ENCODE measurements at regions of chr1 and their contacts with region 1.

Region 1: DNA sequence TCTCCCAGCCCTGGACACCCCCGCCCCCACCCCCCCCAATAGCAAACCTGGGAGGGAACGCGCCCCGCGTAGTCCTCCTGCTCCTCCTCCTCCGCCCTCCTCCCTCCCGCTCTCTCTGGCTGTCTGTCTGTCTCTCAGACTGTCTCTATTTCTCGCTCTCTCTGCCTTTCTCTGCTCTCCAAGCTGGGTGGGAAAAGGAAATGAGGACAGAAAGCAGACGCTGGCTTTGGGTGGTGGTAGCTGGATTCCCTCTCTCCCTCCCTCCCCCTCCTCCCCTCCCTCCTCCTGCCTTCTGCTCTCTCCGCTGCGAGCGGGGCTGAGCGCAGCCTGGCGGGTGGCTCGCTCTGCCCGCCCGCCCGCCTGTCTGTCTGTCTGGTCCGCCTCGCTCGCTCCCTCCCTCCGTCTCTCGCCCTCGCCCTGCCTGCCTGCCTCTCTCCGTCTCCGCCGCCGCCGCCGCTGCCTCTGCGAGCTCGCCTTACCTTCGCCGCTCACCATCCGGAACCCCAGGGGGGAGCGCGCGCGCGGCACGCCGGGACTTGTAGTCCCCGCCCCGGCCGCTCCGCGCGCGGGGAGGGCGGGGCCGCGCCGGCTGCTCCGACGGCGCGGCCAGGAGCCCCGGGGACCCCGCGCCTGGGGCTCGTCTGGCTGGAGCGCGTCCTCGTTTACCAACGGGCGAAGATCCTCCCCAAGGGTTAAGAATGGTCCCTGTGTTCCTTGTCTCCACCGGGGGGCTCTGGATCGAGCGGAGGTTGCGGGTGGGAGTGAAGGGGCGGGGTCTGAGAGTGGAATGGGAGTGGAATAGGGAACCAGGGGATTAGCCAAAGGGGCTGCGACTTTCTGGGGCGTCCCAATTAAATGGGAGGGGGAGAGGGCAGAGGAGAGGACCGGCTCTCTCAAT is at the start of gene AHDC1:
- DNase-seq: peak; percentile 94
- ATAC-seq: peak; percentile 88
- H3K4me3 Mint-ChIP-seq: peak within 1 kb of the TSS; percentile 88
- H3K27ac Mint-ChIP-seq: peak within 1 kb of the TSS; percentile 82
- H3K4me1 Mint-ChIP-seq: peaks cover 45% of the 10 kb centered on the region
- H3K27me3 Mint-ChIP-seq: no peaks in the 10 kb centered on the region
- total RNA-seq, gene AHDC1: 20.9 to 22.7 TPM

Region 2: DNA sequence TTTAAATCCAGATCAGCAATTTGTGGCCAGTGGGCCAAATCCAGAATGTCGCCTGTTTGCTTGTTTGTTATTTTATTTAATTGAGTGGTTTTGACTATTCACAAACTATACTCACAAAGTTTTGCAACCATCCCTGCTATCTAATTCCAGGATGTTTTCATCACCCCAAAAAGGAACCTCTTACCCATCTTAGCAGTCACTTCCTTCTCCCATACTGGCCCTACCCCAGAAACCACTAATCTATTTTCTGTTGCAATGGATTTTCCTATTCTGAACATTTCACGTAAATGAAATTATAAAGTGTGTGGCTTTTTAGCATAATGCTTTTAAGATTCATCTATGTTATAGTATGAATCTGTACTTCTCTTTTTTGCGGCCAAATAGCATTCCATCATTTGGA is 328.2 kb before region 1 on chr1:
- CTCF ChIA-PET with region 1: no interaction called
- POLR2A ChIA-PET with region 1: no interaction called
- DNase-seq: no peak
- ATAC-seq: no peak
- H3K4me3 Mint-ChIP-seq: no peak overlapping the region
- H3K27ac Mint-ChIP-seq: no peak overlapping the region
- H3K4me1 Mint-ChIP-seq: no peaks in the 10 kb centered on the region
- H3K27me3 Mint-ChIP-seq: no peaks in the 10 kb centered on the region

Region 3: GRCh38 chr1:27392096-27392777 is 211.7 kb before region 1 on chr1 and contains the start of gene GPR3:
- CTCF ChIA-PET with region 1: interaction called, 34 read pairs
- POLR2A ChIA-PET with region 1: no interaction called
- DNase-seq: peak; percentile 95
- ATAC-seq: peak; percentile 94
- H3K4me3 Mint-ChIP-seq: peak within 1 kb of the TSS; percentile 74
- H3K27ac Mint-ChIP-seq: peak within 1 kb of the TSS; percentile 82
- H3K4me1 Mint-ChIP-seq: peaks cover 25% of the 10 kb centered on the region
- H3K27me3 Mint-ChIP-seq: peaks cover 12% of the 10 kb centered on the region
- total RNA-seq, gene GPR3: 0.47 to 0.66 TPM

Region 4: GRCh38 chr1:27525296-27526272 is 78.3 kb before region 1 on chr1:
- CTCF ChIA-PET with region 1: interaction called, 97 read pairs
- POLR2A ChIA-PET with region 1: interaction called, 3 read pairs
- DNase-seq: peak; percentile 85
- ATAC-seq: peak; percentile 56
- H3K4me3 Mint-ChIP-seq: peak overlapping the region; percentile 66
- H3K27ac Mint-ChIP-seq: peak overlapping the region; percentile 65
- H3K4me1 Mint-ChIP-seq: peaks cover 67% of the 10 kb centered on the region
- H3K27me3 Mint-ChIP-seq: no peaks in the 10 kb centered on the region

Region 5: DNA sequence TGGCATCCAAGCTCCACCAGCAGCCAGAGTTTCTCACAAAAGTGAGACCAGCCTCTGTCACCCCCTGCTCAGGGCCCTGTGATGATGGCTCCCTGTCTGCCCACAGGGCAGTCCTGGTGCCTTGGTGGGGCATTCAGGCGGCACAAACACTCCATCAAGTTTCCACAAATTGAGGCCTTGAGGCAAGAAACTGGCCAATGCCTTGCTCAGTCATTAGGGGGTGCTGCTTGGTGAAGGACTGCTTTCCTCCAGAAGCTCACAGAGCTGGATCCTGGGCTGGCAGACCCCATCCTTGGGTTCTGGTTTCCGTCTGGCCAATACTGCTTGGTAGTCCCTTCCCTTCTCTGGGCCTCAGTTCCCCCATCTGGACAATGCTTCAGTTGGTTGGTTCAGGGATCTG is 12.5 kb after region 1 on chr1:
- CTCF ChIA-PET with region 1: interaction called, 61 read pairs
- POLR2A ChIA-PET with region 1: no interaction called
- DNase-seq: no peak
- ATAC-seq: no peak
- H3K4me3 Mint-ChIP-seq: no peak overlapping the region
- H3K27ac Mint-ChIP-seq: no peak overlapping the region
- H3K4me1 Mint-ChIP-seq: peaks cover 49% of the 10 kb centered on the region
- H3K27me3 Mint-ChIP-seq: peaks cover 5% of the 10 kb centered on the region

Region 6: DNA sequence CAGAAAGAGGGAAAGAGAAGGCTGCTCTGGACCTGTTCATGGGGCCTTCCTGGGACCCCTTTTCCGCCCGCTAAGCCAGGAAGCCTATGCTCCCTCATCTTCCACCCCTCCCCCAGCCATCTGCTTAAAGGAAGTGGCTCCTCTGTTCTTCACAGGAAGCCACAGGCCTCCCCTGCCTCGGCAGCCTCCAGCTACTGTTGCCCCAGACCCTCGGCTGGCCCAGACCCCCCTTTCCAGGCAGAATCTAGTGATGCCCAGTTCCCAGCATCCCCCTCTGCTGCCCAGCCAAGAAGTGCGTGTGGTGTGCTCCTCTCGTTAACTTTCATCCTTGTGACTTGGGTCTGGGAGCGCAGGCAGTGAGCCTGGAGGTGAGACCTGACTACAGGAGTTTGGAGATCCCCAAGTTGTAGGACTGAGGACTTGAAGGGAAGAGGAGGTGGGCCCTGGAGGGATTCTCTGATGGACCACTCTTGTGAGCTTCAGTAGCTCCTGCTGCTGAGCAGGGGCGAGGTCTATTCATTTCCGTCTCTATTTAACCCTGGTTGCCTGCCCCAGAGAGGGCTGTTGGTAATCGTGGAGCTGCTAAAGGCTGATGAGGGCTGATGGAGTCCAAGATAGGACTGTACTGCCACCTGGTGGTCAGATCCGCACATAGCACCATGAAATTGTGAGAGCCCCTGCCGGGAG is 58.9 kb after region 1 on chr1:
- CTCF ChIA-PET with region 1: interaction called, 320 read pairs
- POLR2A ChIA-PET with region 1: interaction called, 81 read pairs
- DNase-seq: peak; percentile 94
- ATAC-seq: peak; percentile 83
- H3K4me3 Mint-ChIP-seq: peak overlapping the region; percentile 75
- H3K27ac Mint-ChIP-seq: peak overlapping the region; percentile 98
- H3K4me1 Mint-ChIP-seq: peaks cover 68% of the 10 kb centered on the region
- H3K27me3 Mint-ChIP-seq: no peaks in the 10 kb centered on the region

Measured in activated CD8-positive, alpha-beta T cell treated with anti-CD3 and anti-CD28 coated beads, Interleukin-2, amount 10 ng/mL, durations not matched to agents 7 days and 5 days (primary cell).